K562 (cell line): ENCODE measurements at regions of chr2 and their contacts with region 1.

Region 1: DNA sequence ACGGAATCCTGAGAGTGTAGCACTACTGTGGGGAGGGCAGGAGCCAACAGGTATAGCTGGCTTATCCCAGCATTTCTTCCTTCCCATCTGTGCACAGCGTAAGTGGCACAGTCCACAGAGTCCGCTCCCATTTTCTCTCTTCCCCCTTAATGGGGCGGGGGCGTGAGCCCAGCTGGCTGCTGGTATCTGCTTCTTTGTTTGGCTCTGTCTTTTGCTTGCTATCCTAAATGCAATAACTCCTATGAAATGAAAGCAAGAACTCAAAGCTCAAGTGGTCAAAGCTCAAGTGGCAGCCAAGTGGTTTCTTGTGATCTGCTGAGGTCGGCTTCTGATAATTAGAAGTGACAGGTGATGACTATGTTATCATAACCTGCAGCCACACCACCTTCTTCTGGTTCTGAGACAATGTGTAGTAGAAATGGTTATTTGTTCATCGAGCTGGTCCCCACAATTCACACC is 192.7 kb downstream of the PLCL1 start:
- DNase-seq: peak in 2 of 4 experiments; percentile 16 to 65
- ATAC-seq: peak; percentile 43
- H3K4me3 ChIP-seq: no peak overlapping the region
- H3K27ac ChIP-seq: peak overlapping the region; percentile 67
- H3K4me1 ChIP-seq: peaks cover 22 to 56% of the 10 kb centered on the region in 2 experiments
- H3K27me3 ChIP-seq: no peaks in the 10 kb centered on the region
- CTCF ChIP-seq: no peak
- EP300 ChIP-seq: no peak
- POLR2A ChIP-seq: no peak
- RAD21 ChIP-seq: no peak

Region 2: DNA sequence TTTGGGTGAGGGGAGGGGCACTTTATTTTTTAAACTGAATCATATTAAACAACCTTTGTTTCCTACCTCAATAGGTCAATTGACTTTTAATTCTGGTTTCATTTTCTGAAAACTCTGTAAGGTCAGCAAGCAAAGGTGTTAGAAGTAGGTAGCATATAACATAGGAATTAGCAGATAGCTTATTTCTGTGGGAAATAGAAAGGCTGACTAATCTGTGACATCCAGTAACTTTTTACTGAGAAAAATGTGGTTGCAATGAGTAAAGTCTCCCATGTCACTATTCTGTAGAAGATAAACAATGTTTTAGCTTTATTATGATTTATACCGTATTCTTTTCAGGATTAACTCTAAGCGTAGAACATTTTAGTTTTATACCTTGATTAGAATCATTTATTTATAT is 47.7 kb after region 1 on chr2:
- CTCF ChIA-PET with region 1: no interaction called
- POLR2A ChIA-PET with region 1: no interaction called
- in situ Hi-C with region 1: no loop called
- intact Hi-C with region 1: loop called (anchors 5 kb)
- DNase-seq: no peak
- ATAC-seq: no peak
- H3K4me3 ChIP-seq: no peak overlapping the region
- H3K27ac ChIP-seq: no peak overlapping the region
- H3K4me1 ChIP-seq: peaks cover 0 to 8% of the 10 kb centered on the region in 2 experiments; a peak in 2 of 5 replicates
- H3K27me3 ChIP-seq: no peaks in the 10 kb centered on the region
- CTCF ChIP-seq: no peak
- EP300 ChIP-seq: no peak
- POLR2A ChIP-seq: no peak
- RAD21 ChIP-seq: no peak